GM23248 (cell line): ENCODE measurements at regions of chr4 and their contacts with region 1.

Region 1: DNA sequence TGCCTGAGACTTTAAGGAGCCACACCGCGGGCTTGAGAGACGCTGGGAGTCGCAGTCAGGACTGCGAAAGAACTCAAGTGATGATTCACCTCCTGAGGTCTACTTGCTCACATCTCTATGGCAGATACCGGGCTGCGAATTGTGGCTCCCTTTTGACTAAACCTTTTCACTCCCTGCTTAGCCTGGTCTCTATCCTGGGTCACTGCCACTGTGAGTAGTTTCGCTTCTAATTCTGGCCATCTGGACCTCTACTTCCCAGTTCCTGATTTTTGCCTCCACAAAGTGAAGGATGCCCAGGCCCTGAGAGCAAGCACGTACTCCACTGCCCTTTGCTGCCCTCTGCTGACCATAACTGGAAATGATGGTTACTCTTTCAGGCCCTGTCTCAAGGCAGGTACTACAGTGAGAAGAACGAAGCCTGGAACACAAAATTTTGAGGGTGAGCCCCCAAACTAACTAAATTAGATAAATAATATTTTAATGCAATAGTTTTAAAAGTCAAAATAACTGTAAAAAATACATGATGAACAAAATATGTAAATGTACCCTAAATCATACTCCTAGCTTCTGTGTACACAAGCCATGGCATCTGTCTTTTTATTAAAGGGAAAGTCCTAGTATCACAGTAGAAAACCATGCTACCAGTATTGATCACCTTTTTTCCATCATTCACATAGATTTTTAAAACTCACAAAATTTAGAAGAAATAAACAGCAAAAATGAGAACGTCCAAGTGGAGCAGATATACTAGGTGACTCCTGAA is 16.7 kb downstream of the MAD2L1 start:
- DNase-seq: peak; percentile 84
- H3K4me3 ChIP-seq: peak overlapping the region; percentile 40; the same call in 1 of the 2 replicates
- H3K27ac ChIP-seq: no peak overlapping the region
- H3K4me1 ChIP-seq: peaks cover 10% of the 10 kb centered on the region
- H3K27me3 ChIP-seq: no peaks in the 10 kb centered on the region

Region 2: GRCh38 chr4:119314356-119314755 is 735.6 kb before region 1 on chr4:
- in situ Hi-C with region 1: loop called (anchors 10 kb)
- DNase-seq: peak; percentile 70
- H3K4me3 ChIP-seq: no peak overlapping the region
- H3K27ac ChIP-seq: no peak overlapping the region
- H3K4me1 ChIP-seq: peaks cover 15% of the 10 kb centered on the region
- H3K27me3 ChIP-seq: no peaks in the 10 kb centered on the region

Region 3: GRCh38 chr4:119564106-119564505 is 485.8 kb before region 1 on chr4:
- in situ Hi-C with region 1: loop called (anchors 10 kb)
- DNase-seq: no peak
- H3K4me3 ChIP-seq: no peak overlapping the region
- H3K27ac ChIP-seq: no peak overlapping the region
- H3K4me1 ChIP-seq: no peaks in the 10 kb centered on the region
- H3K27me3 ChIP-seq: no peaks in the 10 kb centered on the region

Region 4: DNA sequence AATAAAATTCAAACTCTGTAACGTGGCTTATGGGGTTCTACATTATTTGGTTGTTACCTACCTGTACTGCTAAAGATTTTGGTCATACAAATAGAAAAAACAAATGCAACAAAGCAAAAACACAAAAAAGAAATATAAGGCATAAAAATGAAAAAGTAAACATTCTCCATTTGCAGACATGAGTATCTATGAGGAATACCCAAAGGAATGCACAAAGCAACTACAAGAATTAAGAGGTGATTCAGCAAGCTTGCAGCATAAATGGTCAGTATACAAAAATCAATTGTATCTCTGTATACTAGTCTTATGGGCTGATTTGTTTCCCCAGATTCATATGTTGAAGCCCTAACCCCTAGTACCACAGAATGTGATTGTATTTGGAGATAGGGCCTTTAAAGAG is 417.7 kb before region 1 on chr4:
- in situ Hi-C with region 1: loop called (anchors 10 kb)
- DNase-seq: peak; percentile 82
- H3K4me3 ChIP-seq: no peak overlapping the region
- H3K27ac ChIP-seq: no peak overlapping the region
- H3K4me1 ChIP-seq: peaks cover 9% of the 10 kb centered on the region
- H3K27me3 ChIP-seq: no peaks in the 10 kb centered on the region